Posterior vena cava (tissue), 2 donors: ENCODE measurements at regions of chr11 and their contacts with region 1.

Region 1: DNA sequence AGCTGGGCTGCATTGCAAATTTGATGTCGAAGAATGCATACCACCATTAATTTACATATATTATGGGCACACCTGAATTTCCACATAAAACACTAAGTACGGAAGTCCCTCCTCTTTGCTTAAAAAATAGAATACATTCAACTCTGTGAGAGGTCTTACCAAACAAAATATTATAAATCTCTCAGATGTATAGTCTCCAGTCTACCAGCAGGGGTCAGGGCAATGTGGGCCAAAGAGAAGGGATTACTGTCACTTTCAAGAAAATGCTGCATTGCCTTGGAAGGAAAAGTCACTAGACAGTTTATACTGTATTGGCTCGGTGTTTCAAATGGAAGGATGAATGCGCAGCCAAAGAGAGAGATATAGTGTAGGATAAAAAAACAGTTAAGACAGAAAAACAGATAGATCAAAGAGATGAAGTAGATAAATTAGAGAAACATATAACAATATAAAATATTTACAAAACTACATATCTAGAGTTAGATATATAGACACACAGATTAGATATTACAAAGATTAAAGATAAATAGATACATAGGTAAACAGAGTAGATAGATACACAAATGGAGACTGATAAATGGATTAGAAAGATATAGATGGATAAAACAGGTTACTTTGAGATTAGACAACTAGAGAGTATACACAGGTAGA is 20.9 kb downstream of the SERGEF start:
- DNase-seq: no peak

Region 2: DNA sequence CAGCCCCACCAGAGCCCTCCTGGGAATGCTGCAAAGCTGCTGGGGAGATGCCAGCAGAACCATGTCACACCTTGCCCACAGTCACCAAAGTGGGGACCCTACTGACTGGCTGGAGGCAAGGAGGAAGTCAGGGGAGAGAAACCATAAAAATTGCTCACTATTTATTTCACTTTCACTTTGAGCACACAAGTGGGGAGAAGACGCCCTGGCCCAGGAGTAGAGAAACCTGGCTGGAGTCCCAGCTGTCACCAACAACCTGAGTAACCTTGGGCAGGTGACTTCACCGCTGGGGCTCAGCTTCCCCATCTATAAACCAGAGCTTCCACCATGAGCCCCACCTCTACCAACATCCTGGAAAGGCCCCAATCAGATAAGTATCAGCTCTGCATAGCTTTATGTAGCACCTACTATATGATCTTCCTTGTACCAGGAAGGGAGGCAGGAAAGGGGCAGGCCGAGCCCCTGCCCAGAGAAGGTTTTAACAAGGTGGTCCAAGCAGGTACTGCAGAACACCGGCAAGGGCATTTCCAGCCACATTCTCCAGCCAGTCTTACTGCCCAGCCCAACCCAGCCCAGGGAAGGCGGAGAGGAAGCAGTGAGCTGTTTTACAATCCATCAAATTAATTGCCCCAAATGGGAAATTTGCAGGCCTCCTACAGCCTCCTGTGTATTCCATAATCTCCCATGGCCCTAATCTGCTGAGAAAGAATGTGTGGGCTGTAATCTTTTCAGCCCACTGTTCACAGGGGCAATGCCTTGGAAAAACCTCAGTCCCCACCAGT is 1005.3 kb before region 1 on chr11:
- intact Hi-C with region 1: loop called in 1 of 2 experiments (anchors 5 kb)
- DNase-seq: no peak